Heart left ventricle (tissue), 16 donors: ENCODE measurements at regions of chr17 and their contacts with region 1.

Region 1: GRCh38 chr17:31549525-31550388 is 158.3 kb downstream of the RAB11FIP4 start:
- DNase-seq: peak; percentile 90 to 96 (median 92)
- ATAC-seq: peak; percentile 88 to 95 (median 94)
- H3K4me3 ChIP-seq: peak overlapping the region; percentile 51 to 93 (median 80)
- H3K27ac ChIP-seq: peak overlapping the region; percentile 81 to 97 (median 94)
- H3K4me1 ChIP-seq: peaks cover 0 to 17% (median 3%) of the 10 kb centered on the region in 12 donors
- H3K27me3 ChIP-seq: no peaks in the 10 kb centered on the region
- CTCF ChIP-seq: no peak
- POLR2A ChIP-seq: peak in 1 of 2 donors; percentile 68

Region 2: GRCh38 chr17:31487648-31488263 is 62.0 kb before region 1 on chr17:
- intact Hi-C with region 1: no loop called
- DNase-seq: peak; percentile 81 to 92 (median 86)
- ATAC-seq: peak; percentile 76 to 90 (median 88)
- H3K4me3 ChIP-seq: peak overlapping the region; percentile 19 to 76 (median 57)
- H3K27ac ChIP-seq: peak overlapping the region in 8 of 12 donors; percentile 8 to 76 (median 62)
- H3K4me1 ChIP-seq: peaks cover 0 to 53% (median 14%) of the 10 kb centered on the region in 12 donors
- H3K27me3 ChIP-seq: peaks cover 0 to 19% (median 6%) of the 10 kb centered on the region in 9 donors
- CTCF ChIP-seq: no peak
- POLR2A ChIP-seq: peak; percentile 27 to 63

Region 3: GRCh38 chr17:31715446-31715845 is 165.7 kb after region 1 on chr17:
- intact Hi-C with region 1: no loop called
- DNase-seq: no peak
- ATAC-seq: no peak
- H3K4me3 ChIP-seq: no peak overlapping the region
- H3K27ac ChIP-seq: no peak overlapping the region
- H3K4me1 ChIP-seq: no peaks in the 10 kb centered on the region
- H3K27me3 ChIP-seq: no peaks in the 10 kb centered on the region
- CTCF ChIP-seq: no peak
- POLR2A ChIP-seq: no peak

Region 4: DNA sequence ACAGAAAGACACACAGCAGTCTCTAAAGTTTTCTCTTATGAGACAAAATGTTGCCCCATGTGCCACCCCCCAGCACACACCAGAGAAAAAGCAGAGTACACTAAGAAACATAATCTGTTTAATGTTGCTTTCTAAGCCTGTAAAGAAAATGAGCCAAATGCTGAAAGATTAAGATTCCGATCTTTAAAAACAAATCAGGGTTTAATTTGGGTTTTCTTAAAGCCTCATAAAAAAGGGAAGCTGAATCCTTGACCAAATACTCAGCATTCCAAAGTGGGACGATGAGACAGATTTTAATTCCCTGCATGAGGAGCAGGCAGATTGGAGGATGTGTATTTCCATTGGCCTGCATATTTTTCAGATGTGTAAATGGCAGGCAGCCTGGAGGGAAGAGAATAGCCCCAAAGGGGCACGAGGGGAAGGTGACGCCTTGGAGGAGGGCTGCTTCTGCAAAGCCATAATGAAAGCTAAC is 190.9 kb after region 1 on chr17:
- intact Hi-C with region 1: loop called in 2 of 10 experiments (anchors 10 kb)
- DNase-seq: no peak
- ATAC-seq: no peak
- H3K4me3 ChIP-seq: no peak overlapping the region
- H3K27ac ChIP-seq: peak overlapping the region in 5 of 12 donors; percentile 43 to 80 (median 70)
- H3K4me1 ChIP-seq: peaks cover 6 to 63% (median 22%) of the 10 kb centered on the region in 12 donors
- H3K27me3 ChIP-seq: peaks cover 0 to 4% (median 0%) of the 10 kb centered on the region in 9 donors
- CTCF ChIP-seq: no peak
- POLR2A ChIP-seq: no peak

Region 5: DNA sequence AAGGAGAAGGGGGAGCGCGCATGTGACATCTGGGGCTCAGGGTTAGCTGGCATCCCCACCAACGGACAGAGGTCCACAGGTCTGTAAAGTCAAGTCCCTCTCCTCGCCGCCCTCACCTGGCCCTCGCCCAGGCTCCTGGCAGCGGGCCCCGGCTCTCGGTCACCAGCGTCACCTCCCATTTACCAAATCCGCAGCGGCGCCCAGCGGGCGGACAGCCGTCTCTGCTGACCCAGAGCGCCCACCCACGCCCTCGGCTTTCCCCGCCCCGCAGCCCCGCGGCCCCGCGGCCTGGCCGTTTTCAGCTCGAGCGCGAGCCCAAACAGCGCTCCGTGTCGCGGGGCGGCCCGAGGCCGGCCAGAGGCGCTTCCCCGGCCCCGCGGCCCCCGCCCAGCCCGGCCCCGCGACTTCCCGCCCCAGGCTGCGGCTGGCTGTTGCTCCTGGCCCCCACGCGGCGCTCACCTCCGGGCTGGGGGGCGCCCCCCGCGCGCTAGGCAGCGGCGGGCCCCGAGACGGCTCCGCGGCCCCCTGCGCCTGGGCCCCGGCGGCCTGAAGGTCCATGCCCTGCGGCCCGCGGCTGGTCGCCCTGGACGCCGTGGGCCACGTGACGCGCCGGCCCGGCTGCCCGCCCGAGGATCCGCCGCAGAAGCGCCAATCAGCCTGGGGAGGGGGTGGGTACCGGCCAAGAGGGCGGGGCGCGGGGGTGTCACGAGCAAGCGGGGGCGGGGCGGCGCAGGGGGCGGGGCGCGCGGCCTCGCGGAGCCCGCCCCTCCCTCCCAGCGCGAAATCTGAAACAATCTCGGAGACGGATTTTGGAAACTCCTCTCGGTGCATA is 309.1 kb after region 1 on chr17 and contains the start of gene COPRS:
- intact Hi-C with region 1: loop called in 1 of 10 experiments (anchors 5 kb)
- DNase-seq: peak; percentile 91 to 95 (median 94)
- ATAC-seq: peak; percentile 80 to 93 (median 92)
- H3K4me3 ChIP-seq: peak within 1 kb of the TSS; percentile 41 to 95 (median 74)
- H3K27ac ChIP-seq: peak within 1 kb of the TSS; percentile 40 to 91 (median 80)
- H3K4me1 ChIP-seq: peaks cover 0 to 22% (median 17%) of the 10 kb centered on the region in 12 donors
- H3K27me3 ChIP-seq: no peaks in the 10 kb centered on the region
- CTCF ChIP-seq: peak in 6 of 12 donors; percentile 13 to 52 (median 32)
- POLR2A ChIP-seq: peak in 1 of 2 donors; percentile 26
- total RNA-seq, gene COPRS: 39.9 to 104 (median 51.6) TPM